Calu3 (cell line): ENCODE measurements at regions of chr6 and their contacts with region 1.

Region 1: GRCh38 chr6:20008131-20008530 is 171.0 kb downstream of the ID4 start:
- DNase-seq: no peak
- H3K4me3 Mint-ChIP-seq: no peak overlapping the region
- H3K27ac Mint-ChIP-seq: no peak overlapping the region
- H3K4me1 Mint-ChIP-seq: no peaks in the 10 kb centered on the region
- H3K27me3 Mint-ChIP-seq: peaks cover 89% of the 10 kb centered on the region
- CTCF ChIP-seq: no peak

Region 2: DNA sequence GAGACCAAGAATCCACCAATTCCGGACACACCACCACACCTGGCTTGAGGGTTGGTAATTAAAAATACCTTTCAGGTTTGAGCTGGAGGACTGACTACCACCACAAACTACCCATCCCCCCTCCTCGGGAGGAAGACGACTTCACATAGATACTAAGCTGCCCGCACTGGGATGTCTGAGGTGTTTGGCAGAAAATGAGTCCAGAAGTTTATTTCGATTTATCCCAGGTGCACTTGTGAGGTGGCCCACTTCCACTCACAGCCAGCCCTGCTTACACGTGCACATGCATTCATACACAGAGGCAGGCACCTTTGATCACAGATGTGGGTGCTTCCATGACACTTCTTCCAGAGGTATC is 16.2 kb after region 1 on chr6:
- CTCF ChIA-PET with region 1: interaction called, 10 read pairs
- intact Hi-C with region 1: no loop called
- DNase-seq: no peak
- H3K4me3 Mint-ChIP-seq: no peak overlapping the region
- H3K27ac Mint-ChIP-seq: no peak overlapping the region
- H3K4me1 Mint-ChIP-seq: no peaks in the 10 kb centered on the region
- H3K27me3 Mint-ChIP-seq: peaks cover 40% of the 10 kb centered on the region
- CTCF ChIP-seq: no peak

Region 3: DNA sequence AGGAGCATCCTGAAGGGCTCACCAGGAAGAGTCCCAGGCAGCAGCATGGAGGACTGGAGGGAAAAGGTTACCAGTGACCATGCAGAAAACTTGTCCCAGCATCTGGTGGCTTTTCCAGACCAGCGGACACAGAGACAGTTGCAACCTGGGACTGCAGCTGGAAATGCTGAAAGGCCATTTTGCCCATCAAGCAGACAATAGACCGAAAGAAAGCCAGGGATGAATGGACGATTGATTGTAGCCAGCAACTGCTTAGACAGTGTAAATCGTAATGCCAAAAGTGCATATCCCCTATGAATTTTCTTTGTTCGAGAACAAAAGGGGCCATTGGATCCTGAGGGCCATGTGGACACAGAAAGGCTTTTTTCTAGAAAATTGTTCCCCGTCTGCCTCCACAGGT is 88.4 kb after region 1 on chr6:
- CTCF ChIA-PET with region 1: no interaction called
- intact Hi-C with region 1: no loop called
- DNase-seq: no peak
- H3K4me3 Mint-ChIP-seq: no peak overlapping the region
- H3K27ac Mint-ChIP-seq: no peak overlapping the region
- H3K4me1 Mint-ChIP-seq: no peaks in the 10 kb centered on the region
- H3K27me3 Mint-ChIP-seq: no peaks in the 10 kb centered on the region
- CTCF ChIP-seq: no peak